Activated naive CD4-positive, alpha-beta T cell treated with anti-CD3 and anti-CD28 coated beads for 36 hours (primary cell): ENCODE measurements at regions of chr7 and their contacts with region 1.

Region 1: DNA sequence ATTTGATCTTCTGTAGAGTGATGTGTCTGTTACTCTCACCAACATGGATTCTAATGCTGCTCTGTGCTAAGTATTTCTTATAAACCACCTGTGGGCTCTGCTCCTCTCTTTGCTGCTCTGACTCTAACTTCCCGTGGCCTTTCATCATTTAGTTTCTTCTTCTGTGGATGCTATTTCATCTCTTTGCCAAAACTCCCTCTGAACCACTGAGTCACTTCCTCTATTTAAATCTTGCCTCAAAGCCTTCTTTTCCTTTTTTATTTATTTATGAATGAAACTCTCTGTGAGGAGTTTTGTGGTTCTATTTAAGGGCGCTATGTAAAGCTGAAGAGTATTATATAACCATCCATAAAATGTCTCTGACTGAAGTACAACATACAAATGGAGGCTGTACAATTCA is 538.5 kb downstream of the SUGCT start:
- DNase-seq: peak; percentile 29
- H3K4me3 Mint-ChIP-seq: peak overlapping the region; percentile 22
- H3K27ac Mint-ChIP-seq: peak overlapping the region; percentile 75
- H3K4me1 Mint-ChIP-seq: peaks cover 18% of the 10 kb centered on the region
- H3K27me3 Mint-ChIP-seq: peaks cover 4% of the 10 kb centered on the region

Region 2: DNA sequence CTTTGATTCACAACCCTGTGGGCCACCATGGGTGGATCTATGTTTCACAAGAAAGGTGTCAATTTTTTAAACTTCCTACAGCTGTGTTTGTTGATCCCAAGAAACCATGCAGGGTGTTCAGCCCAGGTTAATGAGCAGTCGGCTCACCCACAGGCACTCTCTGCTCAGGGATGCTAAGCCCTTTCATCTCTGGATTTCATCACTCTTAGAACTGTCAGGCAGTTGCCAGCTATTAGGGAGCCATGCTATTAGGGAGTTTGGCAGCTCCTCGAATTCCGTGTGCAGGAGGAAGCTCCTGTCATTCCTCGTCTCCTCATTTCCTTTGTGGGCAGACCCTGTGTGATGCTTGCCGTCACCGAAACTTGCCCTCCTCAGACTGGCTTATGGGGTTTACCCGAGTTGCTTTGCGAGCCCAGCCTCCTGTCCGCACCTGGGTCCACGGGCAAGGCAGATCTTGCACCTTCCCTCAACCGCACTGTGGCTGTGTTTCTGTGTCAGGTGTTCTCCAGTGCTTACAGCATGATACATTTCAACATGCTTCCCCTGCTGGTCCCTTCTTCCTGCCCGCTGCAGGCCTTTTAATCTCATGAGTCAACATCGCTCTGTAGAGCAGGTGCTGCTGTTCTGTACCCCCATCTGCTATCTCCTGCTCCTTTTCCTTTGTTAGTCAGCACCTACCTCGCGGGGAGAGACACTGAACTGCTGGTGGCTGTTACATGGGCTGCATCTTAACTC is 28.7 kb before region 1 on chr7:
- CTCF ChIA-PET with region 1: no interaction called
- intact Hi-C with region 1: loop called (anchors 1 kb)
- DNase-seq: peak; percentile 56
- H3K4me3 Mint-ChIP-seq: peak overlapping the region; percentile 19
- H3K27ac Mint-ChIP-seq: no peak overlapping the region
- H3K4me1 Mint-ChIP-seq: peaks cover 6% of the 10 kb centered on the region
- H3K27me3 Mint-ChIP-seq: peaks cover 2% of the 10 kb centered on the region

Region 3: DNA sequence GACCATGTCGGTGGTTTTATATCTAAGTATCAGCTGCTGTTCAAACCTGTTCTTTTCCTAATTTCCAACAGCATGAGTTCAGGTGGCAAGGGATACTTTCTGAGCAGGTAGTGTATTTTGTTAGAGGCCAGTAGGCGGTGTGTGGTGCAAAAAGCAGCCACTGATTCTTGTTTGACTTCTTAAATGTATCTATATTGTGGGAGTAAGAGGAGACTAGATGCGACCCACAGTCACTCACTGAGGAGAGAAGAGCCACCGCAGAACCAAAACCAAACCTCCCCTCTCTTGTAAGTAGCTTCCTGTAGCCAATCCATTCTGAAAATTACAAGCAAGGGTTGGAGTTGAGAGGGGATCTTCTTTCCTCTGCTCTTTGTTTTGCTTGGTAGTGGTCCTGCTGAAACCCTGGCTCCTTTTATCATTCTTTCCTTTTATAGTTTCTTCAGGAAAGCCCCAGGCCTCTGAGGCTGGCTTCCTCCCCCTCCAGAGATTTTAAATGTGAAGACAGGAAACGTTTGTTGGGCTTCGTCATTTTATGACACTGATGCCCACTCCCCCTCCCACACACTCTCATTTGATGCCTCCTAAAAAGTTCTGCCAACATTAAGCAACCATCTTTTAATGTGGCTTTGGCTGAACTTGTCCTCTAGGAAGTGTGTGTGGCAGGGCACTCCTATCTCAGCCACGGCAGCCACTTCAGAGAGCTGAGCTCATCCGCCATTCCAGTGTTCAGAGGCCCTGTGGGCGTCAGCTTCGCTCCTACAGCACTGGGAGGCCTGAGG is 27.5 kb after region 1 on chr7:
- CTCF ChIA-PET with region 1: no interaction called
- intact Hi-C with region 1: loop called (anchors 1 kb)
- DNase-seq: peak; percentile 57
- H3K4me3 Mint-ChIP-seq: no peak overlapping the region
- H3K27ac Mint-ChIP-seq: peak overlapping the region; percentile 68
- H3K4me1 Mint-ChIP-seq: peaks cover 26% of the 10 kb centered on the region
- H3K27me3 Mint-ChIP-seq: no peaks in the 10 kb centered on the region